ENCODE measurements at regions of chr9 and their contacts with region 1.

Region 1: DNA sequence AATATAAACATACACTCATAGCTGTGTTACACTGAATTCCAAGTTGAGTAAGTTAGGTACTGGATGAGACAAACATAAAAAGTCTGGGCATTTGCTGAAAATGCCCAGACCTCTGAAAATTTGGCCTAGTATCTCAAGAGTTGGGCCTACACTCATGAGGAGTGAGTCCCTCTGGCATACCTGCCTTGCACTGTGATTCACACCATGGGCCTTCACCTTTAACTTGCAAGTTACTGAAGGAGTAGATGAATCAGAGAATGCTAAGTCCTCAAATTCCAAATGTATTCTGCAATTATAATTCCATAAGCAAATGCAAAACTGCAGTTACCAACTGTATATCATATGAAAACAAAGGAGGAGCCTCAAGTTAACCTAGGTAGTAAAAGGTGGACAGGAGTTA is 32.3 kb upstream of the C9orf40 start:
- DNase-seq: no peak
- H3K4me3 ChIP-seq: no peak overlapping the region
- H3K27ac ChIP-seq: no peak overlapping the region
- H3K4me1 ChIP-seq: no peaks in the 10 kb centered on the region; a peak in 1 of 4 replicates
- H3K27me3 ChIP-seq: no peaks in the 10 kb centered on the region
- CTCF ChIP-seq: no peak
- EP300 ChIP-seq: no peak
- RAD21 ChIP-seq: no peak

Region 2: GRCh38 chr9:74846771-74847170 is 138.3 kb before region 1 on chr9:
- CTCF ChIA-PET with region 1: no interaction called
- POLR2A ChIA-PET with region 1: no interaction called
- DNase-seq: no peak
- H3K4me3 ChIP-seq: no peak overlapping the region
- H3K27ac ChIP-seq: no peak overlapping the region
- H3K4me1 ChIP-seq: no peaks in the 10 kb centered on the region
- H3K27me3 ChIP-seq: peaks cover 14% of the 10 kb centered on the region; the same call in 1 of the 2 replicates
- CTCF ChIP-seq: no peak
- EP300 ChIP-seq: no peak
- RAD21 ChIP-seq: no peak

Region 3: DNA sequence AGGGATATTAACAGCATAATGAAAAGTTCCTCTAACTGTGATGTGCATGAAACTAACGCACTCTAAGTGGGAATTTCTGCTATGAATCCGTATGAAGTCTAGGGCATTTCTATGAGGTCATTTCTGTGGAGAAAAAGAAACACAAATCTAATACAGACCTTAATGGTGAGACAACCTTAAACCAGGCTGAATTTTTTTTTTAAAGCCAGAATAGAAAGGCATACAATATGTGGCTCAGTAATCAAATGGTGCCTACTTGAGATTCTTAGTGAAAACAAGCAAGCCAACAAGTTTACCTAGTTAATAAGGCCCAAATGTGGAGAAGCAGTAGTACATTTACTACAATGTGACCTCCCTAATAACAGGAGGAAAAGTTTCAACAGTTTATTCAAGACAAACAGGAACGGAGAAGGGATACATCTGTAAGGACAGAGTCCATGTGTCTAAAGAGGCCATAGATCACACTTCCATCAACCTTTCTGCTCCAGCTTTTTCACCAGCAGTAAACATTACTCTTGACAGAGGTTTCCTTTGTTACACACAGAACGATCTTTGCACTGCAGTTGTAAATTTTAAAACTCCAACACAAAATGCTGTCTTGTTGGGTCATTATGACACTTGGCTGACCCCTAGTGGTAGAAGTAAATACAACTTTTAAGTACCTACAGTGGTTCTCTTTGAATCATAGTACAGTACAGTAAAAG is 16.8 kb after region 1 on chr9:
- CTCF ChIA-PET with region 1: interaction called, 12 read pairs
- POLR2A ChIA-PET with region 1: no interaction called
- DNase-seq: peak; percentile 44
- H3K4me3 ChIP-seq: no peak overlapping the region; a peak in 1 of 4 replicates
- H3K27ac ChIP-seq: no peak overlapping the region
- H3K4me1 ChIP-seq: no peaks in the 10 kb centered on the region
- H3K27me3 ChIP-seq: no peaks in the 10 kb centered on the region
- CTCF ChIP-seq: peak; percentile 83
- EP300 ChIP-seq: no peak
- RAD21 ChIP-seq: peak; percentile 84

Measured in SK-N-SH (cell line).